ENCODE measurements at regions of chr1 and their contacts with region 1.

Region 1: DNA sequence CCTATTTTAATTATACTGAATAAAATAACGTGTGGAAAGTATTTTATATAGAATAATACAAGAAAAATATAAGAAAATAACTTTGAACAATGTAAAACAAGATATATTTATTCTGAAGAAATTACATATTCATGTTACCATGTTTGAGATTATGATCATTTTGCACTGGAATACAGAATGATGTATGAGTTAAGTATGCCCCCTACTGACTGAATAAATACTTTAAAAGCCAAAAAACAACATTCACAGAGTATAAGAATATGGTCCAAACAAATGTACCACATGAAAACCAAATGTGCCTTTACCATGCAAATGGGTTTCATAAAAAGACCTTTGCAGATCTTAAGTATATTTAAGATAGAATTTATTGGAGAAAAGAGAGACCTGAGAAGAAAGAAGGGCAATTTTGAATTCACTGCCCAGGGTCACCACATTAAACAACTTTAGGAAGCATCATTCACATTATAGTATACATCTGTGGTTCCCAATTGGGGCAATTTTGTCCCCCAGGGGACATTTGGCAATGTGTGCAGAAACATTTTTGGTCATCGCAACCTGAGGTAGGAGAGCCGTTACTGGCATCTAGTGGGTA is 136.6 kb upstream of the GFI1 start:
- DNase-seq: no peak
- H3K4me3 ChIP-seq: no peak overlapping the region
- H3K27ac ChIP-seq: no peak overlapping the region
- H3K4me1 ChIP-seq: no peaks in the 10 kb centered on the region
- H3K27me3 ChIP-seq: no peaks in the 10 kb centered on the region
- CTCF ChIP-seq: peak; percentile 80

Region 2: DNA sequence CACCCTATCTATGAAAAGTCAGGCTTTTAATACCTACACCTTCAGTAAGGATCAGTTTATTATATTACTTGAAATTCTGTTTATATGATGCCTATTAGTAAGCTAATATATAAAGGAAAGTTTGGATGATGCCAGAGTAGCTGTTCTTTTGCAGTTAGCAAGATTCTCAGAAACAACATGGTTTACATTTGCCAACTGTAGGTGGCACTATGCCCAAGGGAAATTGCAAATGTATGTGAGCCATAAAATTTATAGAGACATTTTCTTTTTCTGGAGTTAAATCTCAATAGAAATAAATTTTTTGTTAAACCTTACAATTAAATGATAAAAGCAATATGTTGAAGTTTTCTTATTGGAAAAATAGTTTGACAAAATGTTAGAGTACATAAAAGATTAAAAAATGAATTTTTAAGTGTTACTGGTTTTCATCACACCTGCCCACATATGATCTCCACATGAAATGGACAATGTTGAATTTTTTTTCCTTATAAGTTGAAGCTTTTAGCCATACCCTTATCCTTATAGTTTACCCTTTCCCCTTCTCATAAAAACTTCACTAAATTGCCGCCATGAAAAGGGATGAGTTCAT is 625.6 kb before region 1 on chr1:
- CTCF ChIA-PET with region 1: no interaction called
- POLR2A ChIA-PET with region 1: no interaction called
- intact Hi-C with region 1: loop called (anchors 2 kb)
- DNase-seq: peak; percentile 20 to 64
- H3K4me3 ChIP-seq: no peak overlapping the region
- H3K27ac ChIP-seq: no peak overlapping the region
- H3K4me1 ChIP-seq: no peaks in the 10 kb centered on the region
- H3K27me3 ChIP-seq: no peaks in the 10 kb centered on the region
- CTCF ChIP-seq: peak; percentile 94

Region 3: GRCh38 chr1:92404661-92405060 is 218.6 kb before region 1 on chr1:
- CTCF ChIA-PET with region 1: no interaction called
- POLR2A ChIA-PET with region 1: interaction called, 10 read pairs
- intact Hi-C with region 1: no loop called
- DNase-seq: peak; percentile 2 to 62
- H3K4me3 ChIP-seq: no peak overlapping the region
- H3K27ac ChIP-seq: no peak overlapping the region
- H3K4me1 ChIP-seq: 0 out of 2 replicates have a peak, but pooled peaks cover 9% of the 10 kb centered on the region
- H3K27me3 ChIP-seq: no peaks in the 10 kb centered on the region
- CTCF ChIP-seq: no peak

Region 4: GRCh38 chr1:93078986-93079654 is 455.8 kb after region 1 on chr1 and contains the start of gene MTF2:
- CTCF ChIA-PET with region 1: no interaction called
- POLR2A ChIA-PET with region 1: interaction called, 15 read pairs
- intact Hi-C with region 1: no loop called
- DNase-seq: peak; percentile 91 to 95
- H3K4me3 ChIP-seq: peak within 1 kb of the TSS; percentile 87
- H3K27ac ChIP-seq: peak within 1 kb of the TSS; percentile 58
- H3K4me1 ChIP-seq: peaks cover 25% of the 10 kb centered on the region
- H3K27me3 ChIP-seq: no peaks in the 10 kb centered on the region
- CTCF ChIP-seq: no peak
- total RNA-seq, gene MTF2: 31.7 and 38.6 TPM in 2 replicates

Measured in PC-9 (cell line).